Activated T-helper 1 cell treated with anti-CD3 and anti-CD28 coated beads, Interleukin-12 subunit alpha, Interleukin-12 subunit beta, Interleukin-2, Interleukin-4 antibody, amounts not matched to agents 30 ng/mL and 10 ng/mL and 1 ng/mL, durations not matched to agents 14 hours and 24 hours and 36 hours (primary cell): ENCODE measurements at regions of chr4 and their contacts with region 1.

Region 1: GRCh38 chr4:87926554-87927098 is 48.9 kb upstream of the SPP1 start:
- DNase-seq: no peak
- H3K4me3 Mint-ChIP-seq: no peak overlapping the region
- H3K27ac Mint-ChIP-seq: no peak overlapping the region
- H3K4me1 Mint-ChIP-seq: no peaks in the 10 kb centered on the region
- H3K27me3 Mint-ChIP-seq: peaks cover 1% of the 10 kb centered on the region

Region 2: DNA sequence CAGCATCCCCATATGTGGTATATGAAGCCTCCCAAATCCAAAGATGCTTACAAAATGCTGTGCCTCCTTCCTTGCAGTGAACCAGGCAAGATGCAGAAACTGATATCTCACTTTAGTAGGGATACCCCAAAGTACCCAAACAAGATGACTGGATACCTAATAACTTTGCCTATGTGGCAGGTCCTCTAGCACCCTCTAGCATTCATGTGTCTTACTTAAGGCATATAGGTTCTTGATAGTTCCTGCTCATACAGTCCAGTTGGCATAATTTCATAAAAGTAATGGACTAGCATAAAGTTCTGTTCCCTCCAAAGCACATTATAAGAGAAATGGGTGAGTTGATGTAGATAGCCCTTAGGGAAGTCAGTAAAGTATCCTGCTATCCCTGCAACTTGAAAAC is 12.1 kb after region 1 on chr4:
- intact Hi-C with region 1: loop called (anchors 1 kb)
- DNase-seq: no peak
- H3K4me3 Mint-ChIP-seq: no peak overlapping the region
- H3K27ac Mint-ChIP-seq: no peak overlapping the region
- H3K4me1 Mint-ChIP-seq: no peaks in the 10 kb centered on the region
- H3K27me3 Mint-ChIP-seq: peaks cover 7% of the 10 kb centered on the region